PC-9 (cell line): ENCODE measurements at regions of chr10 and their contacts with region 1.

Region 1: DNA sequence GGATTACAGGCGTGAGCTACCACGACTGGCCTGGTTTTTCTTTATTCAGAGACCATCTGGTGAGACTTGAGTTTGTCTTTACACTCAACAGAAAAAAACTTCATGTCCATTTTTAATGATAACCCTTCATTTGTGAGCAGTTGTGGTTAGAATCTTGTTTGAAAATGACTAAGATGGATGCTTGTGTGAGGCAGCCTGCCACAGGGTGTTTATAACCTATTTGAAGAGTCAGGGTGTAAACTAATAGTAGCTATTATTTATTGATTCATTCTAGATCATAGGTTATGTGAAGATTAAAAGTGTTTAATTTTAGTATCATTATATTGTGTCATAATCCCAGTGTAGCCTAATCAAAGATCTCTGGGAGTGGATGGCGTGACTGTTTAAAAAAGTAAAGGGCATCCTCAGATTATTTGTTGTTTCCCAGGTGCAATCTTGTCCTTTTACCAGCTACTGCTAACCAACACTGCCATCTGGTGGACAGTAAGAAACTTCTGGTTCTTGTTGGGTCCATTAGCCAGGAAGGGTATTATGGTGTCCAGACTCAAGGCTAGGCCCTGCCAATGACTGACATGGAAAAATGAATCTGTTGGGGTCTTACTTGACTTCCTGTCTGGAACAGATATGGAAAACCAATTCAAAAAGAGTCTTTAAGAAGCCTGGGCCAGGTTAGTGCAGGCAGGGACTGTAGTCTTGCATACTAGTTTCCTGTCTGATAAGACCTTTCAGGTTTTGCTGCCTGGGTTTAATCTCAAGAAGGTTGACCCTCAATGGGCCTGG is 24.9 kb downstream of the NRBF2 start:
- DNase-seq: peak; percentile 39 to 76
- H3K4me3 ChIP-seq: no peak overlapping the region
- H3K27ac ChIP-seq: 0 out of 2 replicates have a peak overlapping the region, but pooled peaks have one; percentile 3
- H3K4me1 ChIP-seq: no peaks in the 10 kb centered on the region
- H3K27me3 ChIP-seq: no peaks in the 10 kb centered on the region
- CTCF ChIP-seq: peak; percentile 95

Region 2: GRCh38 chr10:62492012-62492869 is 665.8 kb before region 1 on chr10:
- CTCF ChIA-PET with region 1: interaction called, 4 read pairs
- POLR2A ChIA-PET with region 1: no interaction called
- intact Hi-C with region 1: loop called (anchors 1 kb)
- DNase-seq: peak in 1 of 2 experiments; percentile 42
- H3K4me3 ChIP-seq: no peak overlapping the region
- H3K27ac ChIP-seq: no peak overlapping the region
- H3K4me1 ChIP-seq: no peaks in the 10 kb centered on the region; the same call in 1 of the 2 replicates
- H3K27me3 ChIP-seq: no peaks in the 10 kb centered on the region
- CTCF ChIP-seq: peak; percentile 70

Region 3: GRCh38 chr10:62502995-62503613 is 654.9 kb before region 1 on chr10:
- CTCF ChIA-PET with region 1: interaction called, 12 read pairs
- POLR2A ChIA-PET with region 1: no interaction called
- intact Hi-C with region 1: no loop called
- DNase-seq: no peak
- H3K4me3 ChIP-seq: no peak overlapping the region
- H3K27ac ChIP-seq: no peak overlapping the region
- H3K4me1 ChIP-seq: no peaks in the 10 kb centered on the region
- H3K27me3 ChIP-seq: no peaks in the 10 kb centered on the region
- CTCF ChIP-seq: no peak

Region 4: DNA sequence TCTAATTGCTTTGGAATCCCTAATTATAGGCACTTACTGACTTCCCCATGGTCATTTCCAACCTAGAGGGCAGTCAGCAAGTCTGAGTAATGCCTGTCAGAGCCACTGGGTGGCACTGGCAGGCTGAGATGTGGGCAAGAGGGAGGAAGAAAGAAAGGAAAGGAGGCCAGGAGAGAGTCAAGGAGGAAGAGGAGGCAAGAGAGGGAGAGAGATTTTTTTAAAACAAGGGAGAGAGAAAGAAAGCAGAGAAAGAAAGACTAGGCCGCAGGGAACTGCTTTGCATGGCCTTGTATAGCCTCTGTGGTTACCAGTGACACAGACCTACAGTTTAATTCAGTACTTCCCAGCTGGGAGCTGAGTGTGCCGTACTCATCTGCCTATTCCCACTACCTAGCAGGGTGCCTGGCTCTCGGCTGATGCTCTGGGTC is 563.9 kb before region 1 on chr10:
- CTCF ChIA-PET with region 1: interaction called, 3 read pairs
- POLR2A ChIA-PET with region 1: no interaction called
- intact Hi-C with region 1: loop called (anchors 1 kb)
- DNase-seq: peak in 1 of 2 experiments; percentile 45
- H3K4me3 ChIP-seq: no peak overlapping the region
- H3K27ac ChIP-seq: no peak overlapping the region
- H3K4me1 ChIP-seq: no peaks in the 10 kb centered on the region
- H3K27me3 ChIP-seq: no peaks in the 10 kb centered on the region
- CTCF ChIP-seq: peak; percentile 97

Region 5: GRCh38 chr10:62610649-62611229 is 547.3 kb before region 1 on chr10:
- CTCF ChIA-PET with region 1: no interaction called
- POLR2A ChIA-PET with region 1: no interaction called
- intact Hi-C with region 1: loop called (anchors 5 kb)
- DNase-seq: peak in 1 of 2 experiments; percentile 22
- H3K4me3 ChIP-seq: no peak overlapping the region
- H3K27ac ChIP-seq: no peak overlapping the region
- H3K4me1 ChIP-seq: no peaks in the 10 kb centered on the region
- H3K27me3 ChIP-seq: no peaks in the 10 kb centered on the region
- CTCF ChIP-seq: peak; percentile 82

Region 6: DNA sequence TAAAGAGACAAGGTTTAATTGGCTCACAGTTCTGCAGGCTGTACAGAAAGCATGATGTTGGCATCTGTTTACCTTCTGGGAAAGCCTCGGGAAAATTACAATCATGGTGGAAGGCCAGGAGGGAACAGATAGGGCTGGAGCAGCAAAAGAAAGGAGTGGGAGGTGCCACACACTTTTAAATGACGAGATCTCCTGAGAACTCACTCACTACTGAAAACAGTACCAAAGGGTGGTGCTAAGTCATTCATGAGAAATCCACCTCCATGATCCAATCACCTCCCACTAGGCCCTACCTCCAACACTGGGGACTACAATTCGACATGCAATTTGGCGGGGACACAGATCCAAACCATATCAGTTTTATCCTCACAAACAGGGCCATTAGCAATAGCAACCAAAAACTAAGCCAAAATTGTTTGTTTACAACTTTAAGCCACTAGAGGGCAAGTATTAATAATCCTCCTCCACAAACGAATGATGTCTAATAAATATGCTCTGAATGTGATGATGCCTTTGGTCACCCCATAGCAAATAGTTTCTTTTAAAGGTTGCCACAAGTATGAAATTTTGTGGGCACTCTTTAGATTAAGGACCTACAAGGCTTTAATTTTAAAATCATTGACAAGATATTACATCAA is 154.1 kb before region 1 on chr10:
- CTCF ChIA-PET with region 1: no interaction called
- POLR2A ChIA-PET with region 1: no interaction called
- intact Hi-C with region 1: loop called (anchors 2 kb)
- DNase-seq: no peak
- H3K4me3 ChIP-seq: no peak overlapping the region
- H3K27ac ChIP-seq: no peak overlapping the region
- H3K4me1 ChIP-seq: peaks cover 9% of the 10 kb centered on the region; the same call in 1 of the 2 replicates
- H3K27me3 ChIP-seq: no peaks in the 10 kb centered on the region
- CTCF ChIP-seq: peak; percentile 61; the same call in 1 of the 2 replicates

Region 7: GRCh38 chr10:63697956-63698786 is 540.1 kb after region 1 on chr10:
- CTCF ChIA-PET with region 1: no interaction called
- POLR2A ChIA-PET with region 1: no interaction called
- intact Hi-C with region 1: no loop called
- DNase-seq: no peak
- H3K4me3 ChIP-seq: no peak overlapping the region
- H3K27ac ChIP-seq: no peak overlapping the region
- H3K4me1 ChIP-seq: peaks cover 30% of the 10 kb centered on the region
- H3K27me3 ChIP-seq: no peaks in the 10 kb centered on the region
- CTCF ChIP-seq: no peak

Region 8: GRCh38 chr10:63965846-63966245 is 807.8 kb after region 1 on chr10:
- CTCF ChIA-PET with region 1: no interaction called
- POLR2A ChIA-PET with region 1: no interaction called
- intact Hi-C with region 1: no loop called
- DNase-seq: no peak
- H3K4me3 ChIP-seq: no peak overlapping the region
- H3K27ac ChIP-seq: no peak overlapping the region
- H3K4me1 ChIP-seq: no peaks in the 10 kb centered on the region
- H3K27me3 ChIP-seq: no peaks in the 10 kb centered on the region
- CTCF ChIP-seq: no peak